Gastrocnemius medialis (tissue), 4 donors: ENCODE measurements at regions of chr13 and their contacts with region 1.

Region 1: DNA sequence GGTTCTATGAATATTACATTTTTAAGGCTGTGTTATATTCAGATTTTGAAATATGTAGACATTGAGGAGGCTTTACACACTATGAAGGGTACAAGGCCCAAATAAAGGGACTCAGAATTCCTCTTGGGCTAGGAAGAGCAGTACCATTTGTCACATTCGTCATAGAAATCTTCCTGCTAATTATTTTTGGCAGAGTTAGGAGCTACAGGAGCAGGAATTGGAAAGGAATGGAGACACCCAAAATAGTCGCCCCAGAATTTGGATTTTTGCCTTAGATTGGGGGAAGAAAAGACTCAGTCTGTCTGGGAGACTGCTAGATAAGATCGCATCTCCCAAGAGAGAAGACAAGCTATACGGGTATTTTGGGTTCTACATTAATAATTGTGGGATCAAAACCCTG is 176.4 kb upstream of the DACH1 start:
- DNase-seq: no peak
- ATAC-seq: no peak
- H3K4me3 ChIP-seq: no peak overlapping the region
- H3K27ac ChIP-seq: no peak overlapping the region
- H3K4me1 ChIP-seq: no peaks in the 10 kb centered on the region
- H3K27me3 ChIP-seq: no peaks in the 10 kb centered on the region
- CTCF ChIP-seq: no peak
- POLR2A ChIP-seq: no peak

Region 2: DNA sequence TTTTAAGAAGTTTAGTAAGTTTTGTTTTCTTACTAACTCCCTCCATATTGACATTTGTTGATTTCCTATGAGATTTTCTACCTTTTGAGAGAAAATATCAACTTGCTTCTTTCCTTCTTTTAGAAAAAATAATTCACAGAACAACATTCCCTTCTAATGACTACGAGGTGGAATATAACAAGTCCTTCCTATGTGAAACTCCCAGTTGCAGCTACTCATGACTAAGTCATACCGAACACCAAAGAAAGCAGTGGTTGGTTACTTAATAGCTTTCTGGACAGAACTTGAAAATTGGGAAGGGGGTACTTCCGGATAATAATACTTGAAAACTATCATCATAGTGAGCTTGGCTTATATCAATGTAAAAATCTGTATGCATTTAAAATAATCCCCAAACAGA is 321.2 kb before region 1 on chr13:
- in situ Hi-C with region 1: no loop called
- intact Hi-C with region 1: no loop called
- DNase-seq: no peak
- ATAC-seq: no peak
- H3K4me3 ChIP-seq: no peak overlapping the region
- H3K27ac ChIP-seq: no peak overlapping the region
- H3K4me1 ChIP-seq: no peaks in the 10 kb centered on the region
- H3K27me3 ChIP-seq: no peaks in the 10 kb centered on the region
- CTCF ChIP-seq: no peak
- POLR2A ChIP-seq: no peak

Region 3: GRCh38 chr13:71979616-71980015 is 63.8 kb before region 1 on chr13:
- in situ Hi-C with region 1: loop called in 1 of 4 experiments (anchors 10 kb)
- intact Hi-C with region 1: no loop called
- DNase-seq: no peak
- ATAC-seq: no peak
- H3K4me3 ChIP-seq: no peak overlapping the region
- H3K27ac ChIP-seq: no peak overlapping the region
- H3K4me1 ChIP-seq: no peaks in the 10 kb centered on the region
- H3K27me3 ChIP-seq: no peaks in the 10 kb centered on the region
- CTCF ChIP-seq: no peak
- POLR2A ChIP-seq: no peak